Head of caudate nucleus (tissue), 42 donors: ENCODE measurements at regions of chr5 and their contacts with region 1.

Region 1: DNA sequence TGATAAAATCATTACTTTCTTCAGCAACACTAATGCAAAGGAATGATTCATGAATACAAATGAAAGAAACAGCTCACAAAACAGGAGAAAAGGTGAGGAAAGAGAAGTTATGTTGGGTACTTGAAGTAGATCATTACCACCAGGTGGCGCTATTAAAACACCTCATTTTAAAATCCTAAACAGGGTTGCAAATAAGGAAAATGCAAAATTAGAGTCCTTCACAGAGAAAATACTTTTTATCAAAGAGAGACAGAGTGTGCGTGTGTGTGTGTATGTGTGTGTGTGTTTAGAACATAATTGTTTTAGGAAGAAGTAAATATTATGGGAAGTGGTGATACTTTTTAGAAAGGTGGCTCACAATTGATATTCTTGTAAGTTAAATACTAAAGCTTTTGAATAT is 49.5 kb upstream of the CD180 start:
- DNase-seq: peak in 10 of 42 donors; percentile 31 to 80 (median 60)

Region 2: GRCh38 chr5:67395790-67396418 is 149.8 kb after region 1 on chr5:
- intact Hi-C with region 1: loop called (anchors 5 kb)
- DNase-seq: peak in 31 of 42 donors; percentile 2 to 75 (median 25)

Region 3: GRCh38 chr5:68246802-68247201 is 1000.7 kb after region 1 on chr5:
- intact Hi-C with region 1: loop called (anchors 5 kb)
- DNase-seq: no peak